Panc1 (cell line): ENCODE measurements at regions of chr10 and their contacts with region 1.

Region 1: DNA sequence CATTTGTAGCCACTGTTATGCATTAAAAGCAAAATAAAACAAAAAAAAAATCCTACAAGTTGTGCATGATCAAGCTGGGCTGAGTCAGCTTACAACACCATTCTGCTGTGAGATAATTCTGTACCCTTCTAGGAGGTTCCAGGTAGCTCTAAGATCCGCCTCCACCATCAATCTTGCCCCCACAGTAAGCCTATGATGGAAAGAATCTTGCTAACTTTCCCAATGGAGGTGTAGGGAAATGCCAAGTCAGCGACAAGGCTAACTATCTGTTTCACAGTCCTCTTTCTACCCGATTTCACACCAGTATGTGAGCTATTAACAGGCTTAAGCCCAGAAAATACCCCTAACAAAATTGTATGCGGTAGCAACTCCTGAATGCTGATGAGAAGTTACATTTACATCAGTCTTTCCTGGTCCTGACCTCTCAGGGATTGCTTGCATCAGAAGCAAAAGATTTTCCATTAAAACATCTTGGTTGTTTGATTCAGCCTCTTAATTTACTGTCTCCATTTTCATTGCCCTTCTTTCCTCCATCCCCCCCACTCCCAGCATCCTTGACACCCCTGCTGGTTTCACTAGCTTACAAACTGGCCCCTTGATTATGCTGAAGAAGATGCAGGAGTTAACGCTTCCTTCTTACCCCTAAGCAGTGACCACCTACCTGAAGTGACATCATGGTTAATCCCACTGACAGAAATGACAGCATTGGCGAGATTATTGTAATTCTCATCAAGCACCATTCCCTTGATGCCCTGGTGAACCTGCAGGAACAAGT is 27.8 kb downstream of the CPN1 start:
- DNase-seq: no peak
- ATAC-seq: no peak
- H3K4me3 ChIP-seq: no peak overlapping the region
- H3K27ac ChIP-seq: no peak overlapping the region
- H3K4me1 ChIP-seq: no peaks in the 10 kb centered on the region
- H3K27me3 ChIP-seq: no peaks in the 10 kb centered on the region
- CTCF ChIP-seq: no peak

Region 2: DNA sequence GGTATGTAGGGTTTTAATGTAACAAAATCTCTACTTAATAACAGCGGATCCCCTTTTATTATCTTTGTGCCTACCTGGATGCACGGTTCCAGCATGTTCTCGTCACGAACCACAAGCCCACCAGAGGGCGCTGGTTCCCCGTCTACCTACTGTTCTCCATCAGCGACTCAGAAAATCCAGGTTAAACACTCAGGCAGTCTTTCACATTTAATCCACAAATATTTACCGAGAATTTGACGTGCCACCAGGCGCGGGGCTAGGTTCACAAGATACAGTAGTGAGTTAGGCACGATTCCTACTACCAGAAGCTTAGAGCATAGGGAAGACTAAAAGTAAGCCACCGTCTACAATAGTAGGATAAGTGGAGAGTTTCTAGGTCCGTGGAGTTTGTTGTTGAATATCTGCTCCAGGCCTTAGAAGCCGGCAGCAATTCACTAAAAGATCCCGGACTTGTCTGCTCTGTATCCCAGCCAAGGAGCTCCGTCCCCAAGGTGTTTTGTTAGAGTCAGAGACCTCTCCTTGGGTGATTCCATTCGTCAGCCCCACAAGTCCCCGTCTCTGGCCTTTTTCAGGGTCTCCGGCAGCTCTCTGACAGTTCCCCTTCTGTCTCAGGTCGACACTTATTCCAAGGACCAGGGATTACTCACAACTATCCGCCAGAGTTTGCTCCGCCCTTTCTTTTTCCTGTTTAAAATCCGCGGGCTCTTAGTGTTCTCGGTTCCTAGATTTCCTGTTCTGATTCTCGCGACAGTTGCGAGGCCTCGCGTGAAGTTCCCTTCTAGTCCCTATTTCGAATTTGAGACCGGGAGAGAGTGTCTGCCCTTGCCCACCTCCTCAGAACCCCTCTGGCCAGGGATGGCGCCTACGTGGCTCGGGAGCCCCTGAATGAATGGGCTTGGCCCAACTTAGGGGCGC is 1006.4 kb after region 1 on chr10:
- CTCF ChIA-PET with region 1: no interaction called
- POLR2A ChIA-PET with region 1: interaction called, 12 read pairs
- in situ Hi-C with region 1: no loop called
- intact Hi-C with region 1: no loop called
- DNase-seq: peak; percentile 86
- ATAC-seq: peak; percentile 72
- H3K4me3 ChIP-seq: peak overlapping the region; percentile 76 to 77
- H3K27ac ChIP-seq: peak overlapping the region; percentile 99
- H3K4me1 ChIP-seq: peaks cover 44% of the 10 kb centered on the region
- H3K27me3 ChIP-seq: no peaks in the 10 kb centered on the region
- CTCF ChIP-seq: peak; percentile 98